ENCODE measurements at regions of chr9 and their contacts with region 1.

Region 1: DNA sequence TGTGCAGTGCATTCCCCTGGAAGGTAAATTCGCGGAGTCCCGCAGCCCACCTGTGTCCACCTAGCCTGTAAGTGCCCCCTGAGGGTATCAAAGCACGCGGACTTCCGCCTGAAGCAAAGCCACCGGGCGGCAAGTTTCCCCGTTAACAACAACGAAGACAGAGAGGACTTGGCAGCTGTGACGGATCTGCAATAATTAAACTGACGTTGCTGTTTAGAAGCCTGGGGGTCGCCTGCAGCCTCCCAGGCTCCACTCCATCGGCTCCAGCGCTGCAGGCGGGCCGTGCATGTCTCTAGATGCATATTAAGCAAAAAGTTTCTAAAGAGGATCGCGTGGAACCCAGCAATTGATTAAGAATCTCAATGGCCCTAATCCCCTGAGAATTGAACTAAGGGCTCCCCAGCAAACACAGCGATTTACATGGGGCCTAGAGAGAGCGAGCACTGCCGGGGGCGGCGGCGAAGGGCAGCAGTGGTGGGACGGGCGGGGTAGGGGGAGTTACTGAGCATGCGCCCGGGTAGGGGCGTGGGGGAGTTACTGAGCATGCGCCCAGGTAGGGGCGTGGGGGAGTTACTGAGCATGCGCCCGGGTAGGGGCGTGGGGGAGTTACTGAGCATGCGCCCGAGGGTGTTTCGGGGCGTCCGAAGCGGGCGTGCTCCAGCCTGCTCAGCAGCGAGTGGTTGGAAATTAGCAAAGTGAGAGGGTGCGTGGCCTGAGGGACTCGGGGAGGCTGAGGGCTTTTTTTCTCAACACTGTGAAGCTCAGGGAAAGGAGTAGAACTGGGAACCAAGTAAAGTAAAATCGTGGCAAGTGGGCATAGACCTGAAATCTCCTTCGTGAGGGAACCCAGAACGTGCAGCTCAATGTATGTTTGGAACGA is 255.2 kb downstream of the DOCK8 start:
- DNase-seq: peak; percentile 95
- H3K4me3 Mint-ChIP-seq: peak overlapping the region; percentile 96
- H3K27ac Mint-ChIP-seq: peak overlapping the region; percentile 86
- H3K4me1 Mint-ChIP-seq: peaks cover 22% of the 10 kb centered on the region
- H3K27me3 Mint-ChIP-seq: no peaks in the 10 kb centered on the region

Region 2: GRCh38 chr9:316382-316965 is 153.4 kb before region 1 on chr9:
- CTCF ChIA-PET with region 1: no interaction called
- POLR2A ChIA-PET with region 1: no interaction called
- intact Hi-C with region 1: no loop called
- DNase-seq: no peak
- H3K4me3 Mint-ChIP-seq: no peak overlapping the region
- H3K27ac Mint-ChIP-seq: no peak overlapping the region
- H3K4me1 Mint-ChIP-seq: peaks cover 6% of the 10 kb centered on the region
- H3K27me3 Mint-ChIP-seq: no peaks in the 10 kb centered on the region

Region 3: GRCh38 chr9:447230-448025 is 22.5 kb before region 1 on chr9:
- CTCF ChIA-PET with region 1: interaction called, 3 read pairs
- POLR2A ChIA-PET with region 1: no interaction called
- intact Hi-C with region 1: loop called (anchors 1 kb)
- DNase-seq: peak; percentile 83
- H3K4me3 Mint-ChIP-seq: no peak overlapping the region
- H3K27ac Mint-ChIP-seq: peak overlapping the region; percentile 78
- H3K4me1 Mint-ChIP-seq: peaks cover 27% of the 10 kb centered on the region
- H3K27me3 Mint-ChIP-seq: no peaks in the 10 kb centered on the region

Region 4: GRCh38 chr9:503881-504852 is 34.3 kb after region 1 on chr9:
- CTCF ChIA-PET with region 1: interaction called, 8 read pairs
- POLR2A ChIA-PET with region 1: interaction called, 4 read pairs
- intact Hi-C with region 1: loop called (anchors 2 kb)
- DNase-seq: peak; percentile 82
- H3K4me3 Mint-ChIP-seq: peak within 1 kb of the TSS; percentile 79
- H3K27ac Mint-ChIP-seq: peak within 1 kb of the TSS; percentile 77
- H3K4me1 Mint-ChIP-seq: peaks cover 35% of the 10 kb centered on the region
- H3K27me3 Mint-ChIP-seq: peaks cover 7% of the 10 kb centered on the region

Region 5: DNA sequence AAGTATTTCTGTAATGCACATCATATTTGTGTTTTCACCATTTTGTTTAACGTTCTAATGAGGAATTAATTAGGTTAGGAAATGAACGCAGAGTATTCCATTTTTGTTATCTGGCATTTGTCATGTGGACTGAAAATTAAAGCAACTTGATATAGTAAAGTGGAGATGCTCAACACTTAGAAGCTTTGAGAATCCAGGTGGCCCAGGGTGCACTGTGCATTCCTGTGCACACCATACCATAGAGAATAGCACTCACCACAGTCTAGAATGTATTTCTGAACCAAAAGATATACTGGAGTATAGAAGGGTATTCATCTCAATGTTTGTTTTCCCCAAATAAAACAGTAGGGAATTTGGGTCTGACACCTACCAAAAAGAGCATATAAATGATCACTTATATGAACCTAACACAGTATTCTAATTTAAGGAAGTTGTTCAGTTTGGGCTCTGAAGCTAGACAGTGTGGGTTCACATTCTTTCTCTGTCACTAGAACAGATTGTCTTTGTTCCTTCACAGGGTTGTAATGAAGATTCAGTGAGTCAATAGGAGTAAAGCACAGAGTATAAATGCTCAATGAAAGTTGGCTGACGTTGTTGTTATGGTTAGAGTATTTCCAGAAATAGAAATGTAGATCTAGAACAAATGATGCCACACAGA is 246.0 kb after region 1 on chr9:
- CTCF ChIA-PET with region 1: no interaction called
- POLR2A ChIA-PET with region 1: no interaction called
- intact Hi-C with region 1: no loop called
- DNase-seq: no peak
- H3K4me3 Mint-ChIP-seq: no peak overlapping the region
- H3K27ac Mint-ChIP-seq: no peak overlapping the region
- H3K4me1 Mint-ChIP-seq: no peaks in the 10 kb centered on the region
- H3K27me3 Mint-ChIP-seq: no peaks in the 10 kb centered on the region

Measured in activated CD4-positive, alpha-beta memory T cell treated with anti-CD3 and anti-CD28 coated beads for 36 hours (primary cell).